ENCODE measurements at regions of chr2 and their contacts with region 1.

Region 1: DNA sequence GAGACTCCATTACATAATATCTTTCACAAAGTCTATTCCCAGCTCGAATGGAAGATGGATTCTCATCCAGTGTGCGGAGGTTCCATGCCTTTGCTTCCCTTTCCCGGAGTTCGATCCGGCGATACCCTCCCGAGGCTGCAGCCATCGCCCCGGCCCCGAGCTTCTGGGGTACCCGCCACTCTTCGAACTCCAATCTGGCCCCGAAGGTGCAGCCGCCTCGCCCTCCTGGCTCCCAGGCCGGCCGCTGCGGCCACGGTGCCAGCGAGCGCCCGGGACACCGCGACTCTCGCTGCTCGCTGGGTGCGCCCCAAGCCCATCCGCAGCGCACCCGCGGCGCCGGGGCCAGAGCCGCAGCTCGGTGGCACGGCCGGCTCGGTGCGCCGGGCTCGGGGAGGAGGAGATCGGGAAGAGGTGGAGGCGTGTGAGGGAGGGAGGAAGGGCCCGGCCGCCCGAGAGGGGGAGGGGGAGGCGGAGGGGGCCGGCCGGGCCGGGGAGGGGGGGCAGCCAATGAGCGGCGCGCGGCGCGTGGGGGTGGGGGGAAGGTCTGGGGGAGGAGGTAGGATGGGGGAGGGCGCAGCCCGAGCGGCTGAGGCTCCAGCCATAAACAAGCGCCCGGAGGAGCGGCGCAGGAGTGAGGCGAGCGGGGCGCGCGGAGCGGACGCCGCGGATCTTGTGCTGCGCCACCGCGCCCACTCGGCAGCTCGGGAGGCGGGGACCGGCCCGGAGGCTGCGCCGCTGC is at the start of gene CRIM1:
- DNase-seq: peak; percentile 90
- ATAC-seq: peak; percentile 81 to 87
- total RNA-seq, gene CRIM1: 29.6 to 101 TPM

Region 2: DNA sequence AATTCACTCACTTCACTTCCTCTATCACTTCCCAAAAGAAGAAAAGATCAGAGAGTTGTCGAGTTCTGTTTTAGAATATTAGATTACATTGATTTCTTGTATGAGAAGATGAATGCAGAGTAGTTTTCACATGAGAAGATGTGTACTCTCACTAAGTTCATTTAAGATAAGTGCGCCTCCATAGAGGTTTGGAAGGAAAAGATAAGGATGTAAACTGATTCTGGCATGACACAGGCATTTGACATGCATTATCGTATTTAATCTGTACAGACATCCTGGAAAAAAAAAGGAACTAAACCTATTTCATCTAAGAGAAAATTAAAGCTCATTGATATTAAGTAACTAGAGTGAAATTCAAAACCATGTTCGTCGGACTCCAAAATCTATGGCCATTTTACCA is 152.0 kb before region 1 on chr2:
- intact Hi-C with region 1: no loop called
- DNase-seq: no peak
- ATAC-seq: no peak

Region 3: GRCh38 chr2:36459725-36460137 is 104.4 kb after region 1 on chr2:
- intact Hi-C with region 1: loop called (anchors 5 to 10 kb)
- DNase-seq: no peak
- ATAC-seq: peak in 1 of 2 donors; percentile 24

Region 4: GRCh38 chr2:36502081-36502480 is 146.8 kb after region 1 on chr2:
- intact Hi-C with region 1: loop called (anchors 2 to 5 kb)
- DNase-seq: no peak
- ATAC-seq: no peak

Region 5: GRCh38 chr2:36507408-36507812 is 152.1 kb after region 1 on chr2:
- intact Hi-C with region 1: loop called (anchors 2 to 5 kb)
- DNase-seq: peak; percentile 40
- ATAC-seq: peak; percentile 86 to 98

Region 6: DNA sequence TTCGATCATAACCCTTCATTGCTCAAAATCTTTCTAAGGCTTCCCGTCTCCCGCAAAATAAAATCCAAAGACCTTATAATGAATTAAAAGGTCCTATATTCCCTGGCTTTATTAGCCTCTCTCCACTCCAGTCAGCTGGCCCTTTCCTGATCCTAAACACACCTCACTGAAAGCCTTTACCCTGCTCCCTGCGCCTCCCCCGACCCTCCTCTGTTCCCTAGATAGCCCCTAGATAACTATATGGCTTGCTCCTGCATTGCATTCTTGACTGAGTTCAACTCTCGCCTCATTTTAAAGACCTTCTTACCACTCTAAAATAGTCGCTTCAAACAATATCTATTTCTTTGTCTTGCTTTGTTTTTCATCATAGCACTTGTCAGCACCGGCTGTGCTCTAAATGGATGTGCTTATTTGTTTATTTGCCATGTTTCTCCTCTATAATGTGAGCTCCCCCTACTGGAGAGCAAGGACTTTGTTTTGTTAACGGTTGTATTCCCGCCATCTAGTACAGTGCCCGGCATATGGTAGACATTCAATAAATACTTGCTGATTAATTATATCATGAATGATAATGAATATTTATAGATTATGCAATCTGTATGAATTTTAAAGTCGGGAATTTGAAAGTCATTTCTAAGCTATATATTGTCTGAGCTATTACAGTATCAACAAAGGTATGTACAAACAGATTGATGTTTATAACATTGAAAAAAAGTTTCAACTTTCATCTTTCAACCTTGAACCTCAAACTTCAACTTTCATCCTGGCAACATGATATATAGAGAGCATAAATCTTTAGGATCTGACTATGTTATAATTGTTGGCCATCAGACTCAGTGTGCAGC is 308.8 kb after region 1 on chr2:
- intact Hi-C with region 1: loop called in 1 of 2 experiments (anchors 1 kb)
- DNase-seq: no peak
- ATAC-seq: peak; percentile 83 to 85

Region 7: DNA sequence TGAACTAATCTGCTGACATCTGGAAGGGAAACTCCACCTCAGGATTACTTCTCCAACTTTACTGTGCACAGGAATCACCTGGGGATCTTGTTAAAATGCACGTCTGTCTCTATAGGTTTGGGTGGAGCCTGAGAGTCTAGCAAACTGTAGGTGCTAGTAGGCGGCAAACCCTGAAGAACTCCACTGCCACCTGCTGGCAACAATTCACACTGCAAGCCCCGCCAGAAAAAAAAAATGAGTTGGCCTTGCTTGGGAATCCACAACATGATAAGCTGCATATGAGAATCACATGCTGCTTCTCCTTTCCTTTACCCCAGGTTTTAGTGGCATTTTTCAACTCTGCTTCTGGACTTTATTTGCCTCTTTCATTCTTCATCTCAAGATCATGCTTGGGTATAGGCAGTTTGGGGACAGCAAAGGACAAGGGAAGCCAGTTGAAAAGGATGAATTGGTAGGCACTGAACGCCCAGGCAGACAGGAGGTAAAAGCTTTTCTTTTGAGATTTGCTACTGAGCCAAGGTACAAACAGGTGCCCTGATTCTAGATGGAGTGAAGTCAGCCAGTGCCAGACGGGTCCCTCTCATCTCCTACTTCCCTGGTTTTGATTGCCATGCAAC is 430.0 kb after region 1 on chr2:
- intact Hi-C with region 1: loop called in 1 of 2 experiments (anchors 5 kb)
- DNase-seq: peak; percentile 48
- ATAC-seq: peak in 1 of 2 donors; percentile 58

Measured in left cardiac atrium (tissue), 4 donors.